A549 (cell line): ENCODE measurements at regions of chr5 and their contacts with region 1.

Region 1: DNA sequence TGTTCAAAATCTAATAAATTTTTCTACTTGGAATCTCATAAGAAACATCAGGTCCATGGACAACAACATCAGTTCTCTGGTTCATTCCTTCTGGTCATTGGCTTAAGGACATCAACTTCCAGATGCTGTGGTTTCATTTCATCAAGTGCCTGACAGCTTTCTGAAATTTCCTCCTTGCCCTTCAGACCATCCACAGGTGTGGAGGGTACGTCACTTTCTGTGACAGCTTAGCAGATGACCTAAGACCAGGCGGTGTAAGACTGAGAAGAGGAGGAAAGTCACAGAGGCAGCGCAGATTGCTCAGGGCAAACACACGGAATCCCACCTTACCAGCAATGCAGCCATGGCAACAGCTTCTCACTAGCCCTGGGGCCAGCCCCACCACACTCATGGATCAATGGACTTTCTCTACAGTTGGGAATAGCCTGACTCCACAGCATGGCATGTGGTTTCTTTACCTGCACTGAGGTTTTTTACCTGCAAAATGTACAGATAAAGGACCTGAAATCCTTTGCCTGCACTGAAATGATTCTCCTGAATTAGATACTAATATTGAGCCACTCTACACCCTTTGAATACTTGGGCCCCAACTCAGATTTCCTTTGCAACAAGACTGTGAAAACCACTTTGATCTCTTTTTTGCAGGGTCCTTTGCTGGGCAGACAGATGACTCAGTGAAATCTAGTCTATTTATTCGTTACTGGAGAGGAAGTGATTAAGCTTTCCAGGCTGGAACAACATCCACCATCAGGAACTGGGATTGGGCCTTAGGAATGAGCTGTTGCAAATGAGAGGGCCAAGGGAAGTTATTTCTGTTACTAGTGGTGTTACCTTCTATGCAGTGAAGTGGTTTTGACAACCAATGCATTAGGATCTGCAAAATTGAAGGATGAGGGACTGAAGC is 26.9 kb downstream of the TICAM2 start:
- DNase-seq: no peak
- ATAC-seq: no peak
- H3K4me3 ChIP-seq: no peak overlapping the region
- H3K27ac ChIP-seq: no peak overlapping the region
- H3K4me1 ChIP-seq: peaks cover 10% of the 10 kb centered on the region; the same call in 2 of the 3 replicates
- CTCF ChIP-seq: no peak
- EP300 ChIP-seq: no peak
- POLR2A ChIP-seq: no peak
- RAD21 ChIP-seq: no peak

Region 2: GRCh38 chr5:115317320-115317719 is 258.1 kb before region 1 on chr5:
- CTCF ChIA-PET with region 1: interaction called, 156 read pairs
- POLR2A ChIA-PET with region 1: no interaction called
- DNase-seq: no peak
- ATAC-seq: no peak
- H3K4me3 ChIP-seq: no peak overlapping the region
- H3K27ac ChIP-seq: no peak overlapping the region
- H3K4me1 ChIP-seq: no peaks in the 10 kb centered on the region
- CTCF ChIP-seq: no peak
- EP300 ChIP-seq: no peak
- POLR2A ChIP-seq: no peak
- RAD21 ChIP-seq: no peak

Region 3: GRCh38 chr5:115544436-115545350 is 30.7 kb before region 1 on chr5 and contains the start of gene FEM1C:
- CTCF ChIA-PET with region 1: interaction called, 16 read pairs
- POLR2A ChIA-PET with region 1: interaction called, 11 read pairs
- DNase-seq: peak; percentile 88 to 97
- ATAC-seq: peak; percentile 98 to 99
- H3K4me3 ChIP-seq: peak within 1 kb of the TSS; percentile 82
- H3K27ac ChIP-seq: peak within 1 kb of the TSS; percentile 94 to 96
- H3K4me1 ChIP-seq: peaks cover 30% of the 10 kb centered on the region; the same call in 2 of the 3 replicates
- CTCF ChIP-seq: no peak
- EP300 ChIP-seq: no peak
- POLR2A ChIP-seq: peak; percentile 91
- RAD21 ChIP-seq: no peak
- polyA plus RNA-seq, gene FEM1C: 7.9 and 8.4 TPM in 2 replicates

Region 4: GRCh38 chr5:115565233-115565632 is 10.2 kb before region 1 on chr5:
- CTCF ChIA-PET with region 1: interaction called, 24 read pairs
- POLR2A ChIA-PET with region 1: no interaction called
- DNase-seq: no peak
- ATAC-seq: no peak
- H3K4me3 ChIP-seq: no peak overlapping the region
- H3K27ac ChIP-seq: no peak overlapping the region
- H3K4me1 ChIP-seq: no peaks in the 10 kb centered on the region
- CTCF ChIP-seq: no peak
- EP300 ChIP-seq: no peak
- POLR2A ChIP-seq: no peak
- RAD21 ChIP-seq: no peak

Region 5: GRCh38 chr5:115601701-115602590 is 26.5 kb after region 1 on chr5 and contains the start of gene TICAM2:
- CTCF ChIA-PET with region 1: no interaction called
- POLR2A ChIA-PET with region 1: interaction called, 11 read pairs
- DNase-seq: peak; percentile 22 to 52
- ATAC-seq: peak; percentile 84 to 89
- H3K4me3 ChIP-seq: peak within 1 kb of the TSS; percentile 72
- H3K27ac ChIP-seq: peak within 1 kb of the TSS; percentile 70 to 96
- H3K4me1 ChIP-seq: peaks cover 15% of the 10 kb centered on the region; the same call in 1 of the 3 replicates
- CTCF ChIP-seq: peak; percentile 29; the same call in 2 of the 3 replicates
- EP300 ChIP-seq: no peak
- POLR2A ChIP-seq: no peak
- RAD21 ChIP-seq: no peak
- polyA plus RNA-seq, gene TICAM2: 0.07 and 0.34 TPM in 2 replicates